Transverse colon (tissue), 4 donors: ENCODE measurements at regions of chr16 and their contacts with region 1.

Region 1: GRCh38 chr16:28285649-28286048 is 6.7 kb upstream of the SBK1 start:
- DNase-seq: no peak
- H3K4me3 ChIP-seq: no peak overlapping the region
- H3K27ac ChIP-seq: no peak overlapping the region
- H3K4me1 ChIP-seq: no peaks in the 10 kb centered on the region
- H3K27me3 ChIP-seq: no peaks in the 10 kb centered on the region
- CTCF ChIP-seq: no peak
- EP300 ChIP-seq: no peak
- POLR2A ChIP-seq: no peak

Region 2: GRCh38 chr16:28098959-28099945 is 186.4 kb before region 1 on chr16:
- in situ Hi-C with region 1: no loop called
- intact Hi-C with region 1: no loop called
- DNase-seq: no peak
- H3K4me3 ChIP-seq: no peak overlapping the region
- H3K27ac ChIP-seq: no peak overlapping the region
- H3K4me1 ChIP-seq: no peaks in the 10 kb centered on the region
- H3K27me3 ChIP-seq: no peaks in the 10 kb centered on the region
- CTCF ChIP-seq: no peak
- EP300 ChIP-seq: no peak
- POLR2A ChIP-seq: no peak

Region 3: GRCh38 chr16:28304214-28304613 is 18.6 kb after region 1 on chr16:
- in situ Hi-C with region 1: no loop called
- intact Hi-C with region 1: loop called (anchors 1 kb)
- DNase-seq: no peak
- H3K4me3 ChIP-seq: no peak overlapping the region
- H3K27ac ChIP-seq: no peak overlapping the region
- H3K4me1 ChIP-seq: no peaks in the 10 kb centered on the region
- H3K27me3 ChIP-seq: no peaks in the 10 kb centered on the region
- CTCF ChIP-seq: no peak
- EP300 ChIP-seq: no peak
- POLR2A ChIP-seq: no peak